ENCODE measurements at regions of chr17 and their contacts with region 1.

Region 1: DNA sequence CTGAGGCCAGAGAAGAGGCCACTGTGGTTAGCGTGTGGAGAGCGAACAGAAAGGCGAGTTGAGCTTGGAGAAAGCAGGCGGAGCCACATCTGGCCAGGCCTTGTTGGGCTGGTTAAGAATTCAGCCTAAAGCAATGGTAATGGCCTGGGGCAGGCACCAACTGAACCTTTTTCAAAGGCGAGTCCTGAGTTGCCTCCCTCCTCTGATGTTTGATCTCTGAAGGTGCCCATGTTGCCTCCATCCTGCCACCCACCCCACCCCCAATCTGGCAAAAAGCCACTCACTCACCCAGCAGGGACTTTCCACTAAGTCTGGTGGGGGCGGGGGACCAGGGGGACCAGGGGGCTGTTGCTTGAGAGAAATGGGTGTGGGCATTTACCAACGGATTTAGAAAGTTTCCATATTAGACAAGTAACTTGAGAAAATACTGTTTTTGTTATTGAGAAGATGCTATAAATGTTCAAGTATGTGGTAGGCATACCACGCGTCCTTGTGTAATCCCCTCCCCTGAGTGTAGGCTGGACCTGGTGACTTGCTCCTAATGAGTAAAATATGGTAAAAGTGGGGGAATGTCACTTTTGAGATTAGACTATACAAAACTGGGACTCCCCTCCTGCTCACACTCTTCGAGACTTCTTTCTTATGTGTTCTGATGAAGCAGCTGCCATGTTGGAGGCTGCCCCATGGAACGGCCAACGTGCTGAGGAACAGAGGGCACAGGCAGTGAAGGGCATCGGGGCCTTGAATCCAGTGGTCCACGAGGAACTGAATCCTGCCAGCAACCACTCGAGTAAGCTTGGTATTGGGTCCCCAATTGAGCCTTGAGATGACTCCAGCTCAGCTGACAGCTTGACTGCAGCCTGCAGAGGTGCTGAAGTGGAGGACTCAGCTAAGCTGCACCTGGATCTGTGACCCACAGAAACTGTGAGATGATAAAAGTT is 29.9 kb upstream of the TNS4 start:
- DNase-seq: peak in 7 of 9 experiments; percentile 49 to 89 (median 74)
- ATAC-seq: peak; percentile 8
- H3K4me3 ChIP-seq: no peak overlapping the region
- H3K4me3 Mint-ChIP-seq: peak overlapping the region; percentile 30
- H3K27ac ChIP-seq: no peak overlapping the region
- H3K27ac Mint-ChIP-seq: peak overlapping the region; percentile 78
- H3K4me1 ChIP-seq: peaks cover 70% of the 10 kb centered on the region
- H3K4me1 Mint-ChIP-seq: peaks cover 76% of the 10 kb centered on the region
- H3K27me3 ChIP-seq: no peaks in the 10 kb centered on the region
- H3K27me3 Mint-ChIP-seq: no peaks in the 10 kb centered on the region
- CTCF ChIP-seq: no peak

Region 2: GRCh38 chr17:40309031-40309948 is 222.0 kb before region 1 on chr17 and contains the start of gene RARA:
- CTCF ChIA-PET with region 1: interaction called, 16 read pairs
- POLR2A ChIA-PET with region 1: no interaction called
- intact Hi-C with region 1: loop called in 1 of 2 experiments (anchors 5 kb)
- DNase-seq: peak in 5 of 9 experiments; percentile 45 to 73 (median 55)
- ATAC-seq: peak; percentile 50
- H3K4me3 ChIP-seq: peak within 1 kb of the TSS; percentile 49 to 58
- H3K4me3 Mint-ChIP-seq: no peak within 1 kb of the TSS
- H3K27ac ChIP-seq: peak within 1 kb of the TSS in 1 of 2 experiments; percentile 21
- H3K27ac Mint-ChIP-seq: peak within 1 kb of the TSS; percentile 60
- H3K4me1 ChIP-seq: peaks cover 73% of the 10 kb centered on the region
- H3K4me1 Mint-ChIP-seq: peaks cover 15% of the 10 kb centered on the region
- H3K27me3 ChIP-seq: no peaks in the 10 kb centered on the region
- H3K27me3 Mint-ChIP-seq: no peaks in the 10 kb centered on the region
- CTCF ChIP-seq: no peak
- total RNA-seq, gene RARA: 133 TPM

Region 3: DNA sequence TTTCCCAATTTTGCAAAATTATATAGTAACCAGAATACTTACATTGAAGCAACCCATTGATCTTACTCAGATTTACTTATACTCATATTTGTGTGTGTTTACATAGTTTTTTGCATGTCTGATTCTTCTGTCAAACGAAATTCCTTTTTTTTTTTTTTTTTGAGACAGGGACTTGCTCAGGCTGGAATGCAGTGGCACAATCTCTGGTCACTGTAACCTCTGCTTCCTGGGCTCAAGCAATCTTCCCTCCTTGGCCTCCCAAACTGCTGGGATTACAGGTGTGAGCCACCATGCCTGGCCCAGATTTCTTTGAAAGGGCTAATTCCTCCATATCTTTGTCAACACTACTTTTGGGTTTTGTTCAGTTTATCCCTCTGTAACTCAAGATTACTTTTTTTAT is 143.6 kb before region 1 on chr17:
- CTCF ChIA-PET with region 1: interaction called, 12 read pairs
- POLR2A ChIA-PET with region 1: no interaction called
- intact Hi-C with region 1: no loop called
- DNase-seq: no peak
- ATAC-seq: no peak
- H3K4me3 ChIP-seq: no peak overlapping the region
- H3K4me3 Mint-ChIP-seq: no peak overlapping the region
- H3K27ac ChIP-seq: no peak overlapping the region
- H3K27ac Mint-ChIP-seq: no peak overlapping the region
- H3K4me1 ChIP-seq: no peaks in the 10 kb centered on the region
- H3K4me1 Mint-ChIP-seq: no peaks in the 10 kb centered on the region
- H3K27me3 ChIP-seq: no peaks in the 10 kb centered on the region
- H3K27me3 Mint-ChIP-seq: no peaks in the 10 kb centered on the region
- CTCF ChIP-seq: no peak

Region 4: GRCh38 chr17:40427002-40427491 is 104.3 kb before region 1 on chr17:
- CTCF ChIA-PET with region 1: interaction called, 11 read pairs
- POLR2A ChIA-PET with region 1: interaction called, 4 read pairs
- intact Hi-C with region 1: no loop called
- DNase-seq: peak in 4 of 9 experiments; percentile 14 to 57 (median 44)
- ATAC-seq: peak; percentile 85
- H3K4me3 ChIP-seq: peak overlapping the region in 1 of 2 experiments; percentile 24
- H3K4me3 Mint-ChIP-seq: peak overlapping the region; percentile 31
- H3K27ac ChIP-seq: no peak overlapping the region
- H3K27ac Mint-ChIP-seq: peak overlapping the region; percentile 7
- H3K4me1 ChIP-seq: peaks cover 30% of the 10 kb centered on the region
- H3K4me1 Mint-ChIP-seq: peaks cover 29% of the 10 kb centered on the region
- H3K27me3 ChIP-seq: no peaks in the 10 kb centered on the region
- H3K27me3 Mint-ChIP-seq: no peaks in the 10 kb centered on the region
- CTCF ChIP-seq: no peak

Region 5: GRCh38 chr17:40474419-40475002 is 56.8 kb before region 1 on chr17:
- CTCF ChIA-PET with region 1: interaction called, 60 read pairs
- POLR2A ChIA-PET with region 1: interaction called, 5 read pairs
- intact Hi-C with region 1: loop called (anchors 1 kb)
- DNase-seq: no peak
- ATAC-seq: no peak
- H3K4me3 ChIP-seq: no peak overlapping the region
- H3K4me3 Mint-ChIP-seq: no peak overlapping the region
- H3K27ac ChIP-seq: no peak overlapping the region
- H3K27ac Mint-ChIP-seq: no peak overlapping the region
- H3K4me1 ChIP-seq: peaks cover 11% of the 10 kb centered on the region
- H3K4me1 Mint-ChIP-seq: peaks cover 10% of the 10 kb centered on the region
- H3K27me3 ChIP-seq: no peaks in the 10 kb centered on the region
- H3K27me3 Mint-ChIP-seq: no peaks in the 10 kb centered on the region
- CTCF ChIP-seq: no peak

Region 6: GRCh38 chr17:40516581-40517285 is 14.6 kb before region 1 on chr17:
- CTCF ChIA-PET with region 1: interaction called, 23 read pairs
- POLR2A ChIA-PET with region 1: interaction called, 28 read pairs
- intact Hi-C with region 1: loop called (anchors 1 kb)
- DNase-seq: peak in 8 of 9 experiments; percentile 55 to 93 (median 77)
- ATAC-seq: peak; percentile 69
- H3K4me3 ChIP-seq: peak overlapping the region; percentile 45 to 56
- H3K4me3 Mint-ChIP-seq: peak overlapping the region; percentile 83
- H3K27ac ChIP-seq: peak overlapping the region; percentile 18 to 22
- H3K27ac Mint-ChIP-seq: peak overlapping the region; percentile 95
- H3K4me1 ChIP-seq: peaks cover 46% of the 10 kb centered on the region
- H3K4me1 Mint-ChIP-seq: peaks cover 57% of the 10 kb centered on the region
- H3K27me3 ChIP-seq: no peaks in the 10 kb centered on the region
- H3K27me3 Mint-ChIP-seq: peaks cover 4% of the 10 kb centered on the region
- CTCF ChIP-seq: no peak

Region 7: DNA sequence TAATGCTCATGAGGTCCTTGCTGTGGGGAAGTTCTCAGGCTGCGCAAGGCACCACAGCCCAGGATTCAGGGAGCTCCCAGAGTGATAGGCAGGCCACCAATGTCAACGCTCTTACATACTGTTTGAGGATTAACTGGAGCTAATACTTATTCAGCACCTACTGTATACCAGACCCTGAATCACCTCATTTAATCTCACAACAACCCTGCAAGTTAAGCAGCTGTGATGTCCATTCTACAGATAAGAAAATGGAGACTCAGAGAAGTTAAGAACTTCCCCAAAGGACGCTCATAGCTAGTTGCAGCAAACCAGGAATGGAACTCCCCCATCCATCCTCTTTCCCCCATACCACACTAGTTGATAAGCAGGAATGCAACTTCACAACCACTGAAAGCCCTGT is 59.4 kb after region 1 on chr17:
- CTCF ChIA-PET with region 1: no interaction called
- POLR2A ChIA-PET with region 1: no interaction called
- intact Hi-C with region 1: no loop called
- DNase-seq: no peak
- ATAC-seq: no peak
- H3K4me3 ChIP-seq: no peak overlapping the region
- H3K4me3 Mint-ChIP-seq: no peak overlapping the region
- H3K27ac ChIP-seq: no peak overlapping the region
- H3K27ac Mint-ChIP-seq: peak overlapping the region; percentile 53
- H3K4me1 ChIP-seq: peaks cover 67% of the 10 kb centered on the region
- H3K4me1 Mint-ChIP-seq: peaks cover 84% of the 10 kb centered on the region
- H3K27me3 ChIP-seq: no peaks in the 10 kb centered on the region
- H3K27me3 Mint-ChIP-seq: no peaks in the 10 kb centered on the region
- CTCF ChIP-seq: no peak

Region 8: DNA sequence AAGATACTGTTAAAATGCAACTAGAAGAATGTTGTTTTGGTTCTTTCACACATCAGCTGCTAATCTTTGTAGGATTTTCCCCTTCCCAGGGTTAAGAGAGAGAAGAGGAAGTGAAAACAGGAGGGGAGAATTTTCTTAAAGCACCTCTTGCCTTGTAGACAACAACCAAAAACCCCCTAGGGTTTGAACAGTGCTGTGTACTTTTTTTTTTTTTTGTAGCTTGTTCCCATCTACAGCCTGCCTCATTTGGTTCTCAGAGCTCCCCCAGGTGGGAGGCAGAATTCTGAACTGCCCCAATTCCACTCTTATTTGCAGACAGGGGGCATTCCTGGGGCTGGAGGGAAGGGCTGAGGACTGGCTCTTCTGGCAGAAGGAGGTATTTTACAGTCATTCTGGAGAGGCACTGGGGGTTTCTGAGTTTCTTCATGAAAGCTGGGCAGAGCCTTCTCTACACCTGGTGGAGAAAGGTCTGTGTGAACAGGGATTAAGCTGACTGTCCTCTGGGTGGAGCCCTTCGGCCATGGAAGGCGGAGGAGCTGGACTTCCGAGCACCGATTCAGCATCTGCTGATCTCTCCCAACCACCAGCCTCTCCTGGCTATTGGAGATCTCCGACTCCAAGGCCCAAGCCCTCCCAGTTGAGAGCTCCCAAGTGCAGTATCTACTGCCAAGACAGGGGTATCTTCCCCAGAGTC is 84.1 kb after region 1 on chr17:
- CTCF ChIA-PET with region 1: interaction called, 20 read pairs
- POLR2A ChIA-PET with region 1: interaction called, 12 read pairs
- intact Hi-C with region 1: no loop called
- DNase-seq: peak in 7 of 9 experiments; percentile 45 to 88 (median 71)
- ATAC-seq: peak; percentile 45
- H3K4me3 ChIP-seq: peak overlapping the region in 1 of 2 experiments; percentile 7
- H3K4me3 Mint-ChIP-seq: peak overlapping the region; percentile 44
- H3K27ac ChIP-seq: peak overlapping the region; percentile 62 to 92
- H3K27ac Mint-ChIP-seq: peak overlapping the region; percentile 97
- H3K4me1 ChIP-seq: peaks cover 76% of the 10 kb centered on the region
- H3K4me1 Mint-ChIP-seq: peaks cover 71% of the 10 kb centered on the region
- H3K27me3 ChIP-seq: no peaks in the 10 kb centered on the region
- H3K27me3 Mint-ChIP-seq: no peaks in the 10 kb centered on the region
- CTCF ChIP-seq: no peak